Natural killer cell (primary cell): ENCODE measurements at regions of chr9 and their contacts with region 1.

Region 1: DNA sequence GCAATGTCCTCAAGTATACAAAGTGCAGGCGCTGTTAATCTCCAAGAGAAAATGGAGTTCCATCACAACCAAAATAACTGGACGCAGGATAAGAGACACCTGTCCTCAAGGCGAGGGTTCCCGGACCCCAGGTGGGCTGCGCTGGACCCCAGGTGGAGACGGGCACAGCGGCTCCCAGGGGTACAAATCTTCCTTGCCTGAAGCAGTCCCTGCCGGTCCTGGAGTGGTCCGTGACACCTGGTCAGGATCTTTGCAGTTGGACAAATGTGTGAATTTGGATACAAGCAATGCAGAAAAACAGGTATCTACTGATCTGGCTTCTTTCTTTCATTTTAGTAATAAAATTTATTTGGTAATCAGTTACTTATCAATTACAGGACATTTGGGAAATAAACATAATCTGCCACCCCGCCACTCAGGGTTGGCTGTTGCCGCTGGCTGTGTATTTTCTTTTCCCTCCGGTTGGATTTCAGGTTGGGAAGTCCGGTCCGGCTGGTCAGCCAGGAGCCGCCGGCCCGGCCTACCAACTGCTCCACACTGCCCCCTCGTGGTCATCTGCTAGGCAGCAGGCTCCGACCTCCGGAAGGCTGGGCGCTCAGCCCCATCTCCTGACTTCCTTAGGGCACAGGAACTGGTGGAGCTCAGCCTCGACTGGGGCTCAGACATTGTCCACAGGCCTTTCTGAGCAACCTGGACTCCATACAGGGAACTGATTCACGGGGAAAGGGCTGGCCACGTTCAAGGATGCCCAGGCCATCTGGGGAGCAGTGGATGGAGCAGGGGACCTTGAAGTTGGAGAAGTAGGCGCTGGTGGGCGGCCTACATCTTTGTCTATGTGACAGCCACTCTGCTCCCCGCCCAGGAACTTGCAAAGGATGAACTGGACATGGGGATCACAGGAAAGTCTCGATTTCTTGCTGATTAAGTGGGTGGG is 43.4 kb downstream of the NXNL2 start:
- DNase-seq: peak; percentile 70 to 75
- ATAC-seq: peak; percentile 49 to 92 (median 75)
- H3K4me3 ChIP-seq: no peak overlapping the region
- H3K4me3 Mint-ChIP-seq: peak overlapping the region; percentile 61
- H3K27ac ChIP-seq: no peak overlapping the region
- H3K27ac Mint-ChIP-seq: no peak overlapping the region
- H3K4me1 ChIP-seq: peaks cover 8% of the 10 kb centered on the region
- H3K4me1 Mint-ChIP-seq: peaks cover 0 to 7% of the 10 kb centered on the region in 2 donors
- H3K27me3 ChIP-seq: no peaks in the 10 kb centered on the region
- H3K27me3 Mint-ChIP-seq: peaks cover 6 to 26% of the 10 kb centered on the region in 2 donors
- CTCF ChIP-seq: peak; percentile 99

Region 2: GRCh38 chr9:87678650-87679515 is 899.5 kb before region 1 on chr9:
- intact Hi-C with region 1: loop called (anchors 5 kb)
- DNase-seq: peak in 1 of 2 donors; percentile 69
- ATAC-seq: peak in 1 of 3 donors; percentile 39
- H3K4me3 ChIP-seq: no peak overlapping the region
- H3K4me3 Mint-ChIP-seq: no peak overlapping the region
- H3K27ac ChIP-seq: no peak overlapping the region
- H3K27ac Mint-ChIP-seq: no peak overlapping the region
- H3K4me1 ChIP-seq: no peaks in the 10 kb centered on the region
- H3K4me1 Mint-ChIP-seq: no peaks in the 10 kb centered on the region
- H3K27me3 ChIP-seq: no peaks in the 10 kb centered on the region
- H3K27me3 Mint-ChIP-seq: no peaks in the 10 kb centered on the region
- CTCF ChIP-seq: peak; percentile 52

Region 3: DNA sequence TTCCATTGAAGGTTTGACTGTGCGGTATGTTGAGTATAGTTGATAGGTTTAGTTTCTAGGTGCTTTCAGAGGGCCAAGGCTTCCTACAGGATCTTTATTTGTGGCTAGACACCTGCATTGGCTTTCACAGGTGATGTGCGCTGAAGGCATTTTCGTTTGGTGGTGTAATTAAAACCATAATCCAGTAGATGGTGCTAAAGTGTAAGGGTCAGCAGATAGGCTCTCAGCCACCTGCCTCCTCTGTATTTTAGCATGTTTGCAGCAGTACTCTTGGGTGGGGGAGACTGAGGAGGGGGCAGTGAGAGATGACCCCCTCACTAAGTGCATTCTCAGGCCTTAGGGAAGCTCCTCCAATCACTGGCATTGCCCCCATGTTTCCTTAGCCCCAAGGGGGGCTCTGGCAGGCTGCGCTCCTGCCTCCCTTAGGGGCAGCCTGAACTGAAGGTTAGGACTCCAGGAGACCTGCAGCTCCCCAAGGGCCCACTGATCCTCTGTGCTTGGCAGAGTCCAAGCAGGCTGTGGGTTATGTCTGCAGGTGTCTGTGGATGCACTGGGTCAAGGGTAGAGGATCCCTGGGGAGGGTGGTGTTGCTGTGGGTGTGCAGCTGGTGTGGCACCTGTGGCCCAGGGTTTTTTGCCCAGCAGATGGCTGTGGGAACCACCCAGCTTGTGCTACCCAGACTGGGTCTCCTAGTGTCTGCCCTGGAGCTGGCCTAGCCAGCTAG is 627.5 kb before region 1 on chr9:
- intact Hi-C with region 1: loop called (anchors 2 kb)
- DNase-seq: peak in 1 of 2 donors; percentile 36
- ATAC-seq: peak in 1 of 3 donors; percentile 64
- H3K4me3 ChIP-seq: no peak overlapping the region
- H3K4me3 Mint-ChIP-seq: no peak overlapping the region
- H3K27ac ChIP-seq: no peak overlapping the region
- H3K27ac Mint-ChIP-seq: no peak overlapping the region
- H3K4me1 ChIP-seq: no peaks in the 10 kb centered on the region
- H3K4me1 Mint-ChIP-seq: no peaks in the 10 kb centered on the region
- H3K27me3 ChIP-seq: peaks cover 6% of the 10 kb centered on the region
- H3K27me3 Mint-ChIP-seq: peaks cover 22 to 50% of the 10 kb centered on the region in 2 donors
- CTCF ChIP-seq: peak; percentile 37

Region 4: DNA sequence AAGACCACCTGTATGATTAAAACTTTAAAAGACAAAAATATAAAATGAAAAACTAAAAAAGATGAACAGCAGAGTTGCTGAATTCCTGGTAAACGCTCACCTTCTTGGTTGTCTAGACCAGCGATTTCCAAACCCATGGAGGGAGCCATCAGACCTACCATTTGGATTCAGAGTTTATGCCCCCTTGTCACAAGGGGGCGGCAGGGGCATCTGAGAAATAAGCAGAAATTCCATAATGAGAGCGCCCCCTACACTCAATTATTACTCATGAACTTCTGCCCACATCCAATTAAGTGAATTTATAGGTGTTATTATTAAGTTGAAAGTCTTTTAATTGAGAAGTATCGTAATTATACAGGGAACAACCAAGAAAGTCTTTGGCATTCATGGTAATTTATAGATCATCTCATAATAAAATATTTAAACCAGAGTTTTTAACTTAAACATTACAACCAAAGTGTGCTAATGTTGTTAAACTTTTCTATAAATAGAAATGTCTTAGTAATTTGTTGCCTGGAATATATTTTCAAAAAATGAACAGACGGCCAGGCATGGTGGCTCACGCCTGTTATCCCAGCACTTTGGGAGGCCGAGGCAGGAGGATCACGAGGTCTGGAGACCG is 404.9 kb before region 1 on chr9:
- intact Hi-C with region 1: loop called (anchors 1 kb)
- DNase-seq: peak in 1 of 2 donors; percentile 77
- ATAC-seq: peak; percentile 64 to 79 (median 68)
- H3K4me3 ChIP-seq: no peak overlapping the region
- H3K4me3 Mint-ChIP-seq: no peak overlapping the region
- H3K27ac ChIP-seq: no peak overlapping the region
- H3K27ac Mint-ChIP-seq: no peak overlapping the region
- H3K4me1 ChIP-seq: peaks cover under 1% of the 10 kb centered on the region
- H3K4me1 Mint-ChIP-seq: peaks cover 3 to 17% of the 10 kb centered on the region in 2 donors
- H3K27me3 ChIP-seq: peaks cover 2% of the 10 kb centered on the region
- H3K27me3 Mint-ChIP-seq: peaks cover 0 to 3% of the 10 kb centered on the region in 2 donors
- CTCF ChIP-seq: peak; percentile 78

Region 5: GRCh38 chr9:88593537-88594185 is 15.3 kb after region 1 on chr9:
- intact Hi-C with region 1: no loop called
- DNase-seq: peak in 1 of 2 donors; percentile 74
- ATAC-seq: peak in 2 of 3 donors; percentile 49 to 78
- H3K4me3 ChIP-seq: no peak overlapping the region
- H3K4me3 Mint-ChIP-seq: no peak overlapping the region
- H3K27ac ChIP-seq: no peak overlapping the region
- H3K27ac Mint-ChIP-seq: no peak overlapping the region
- H3K4me1 ChIP-seq: no peaks in the 10 kb centered on the region
- H3K4me1 Mint-ChIP-seq: peaks cover 5 to 7% of the 10 kb centered on the region in 2 donors
- H3K27me3 ChIP-seq: no peaks in the 10 kb centered on the region
- H3K27me3 Mint-ChIP-seq: peaks cover 7% of the 10 kb centered on the region in 2 donors
- CTCF ChIP-seq: peak; percentile 60